Endothelial cell of umbilical vein (primary cell): ENCODE measurements at regions of chr2 and their contacts with region 1.

Region 1: GRCh38 chr2:39379643-39380524 is 57.2 kb downstream of the MAP4K3 start:
- DNase-seq: peak; percentile 69
- H3K4me3 ChIP-seq: no peak overlapping the region
- H3K27ac ChIP-seq: peak overlapping the region; percentile 73
- H3K4me1 ChIP-seq: peaks cover 11% of the 10 kb centered on the region
- H3K27me3 ChIP-seq: no peaks in the 10 kb centered on the region
- CTCF ChIP-seq: peak; percentile 29 to 34
- POLR2A ChIP-seq: no peak

Region 2: DNA sequence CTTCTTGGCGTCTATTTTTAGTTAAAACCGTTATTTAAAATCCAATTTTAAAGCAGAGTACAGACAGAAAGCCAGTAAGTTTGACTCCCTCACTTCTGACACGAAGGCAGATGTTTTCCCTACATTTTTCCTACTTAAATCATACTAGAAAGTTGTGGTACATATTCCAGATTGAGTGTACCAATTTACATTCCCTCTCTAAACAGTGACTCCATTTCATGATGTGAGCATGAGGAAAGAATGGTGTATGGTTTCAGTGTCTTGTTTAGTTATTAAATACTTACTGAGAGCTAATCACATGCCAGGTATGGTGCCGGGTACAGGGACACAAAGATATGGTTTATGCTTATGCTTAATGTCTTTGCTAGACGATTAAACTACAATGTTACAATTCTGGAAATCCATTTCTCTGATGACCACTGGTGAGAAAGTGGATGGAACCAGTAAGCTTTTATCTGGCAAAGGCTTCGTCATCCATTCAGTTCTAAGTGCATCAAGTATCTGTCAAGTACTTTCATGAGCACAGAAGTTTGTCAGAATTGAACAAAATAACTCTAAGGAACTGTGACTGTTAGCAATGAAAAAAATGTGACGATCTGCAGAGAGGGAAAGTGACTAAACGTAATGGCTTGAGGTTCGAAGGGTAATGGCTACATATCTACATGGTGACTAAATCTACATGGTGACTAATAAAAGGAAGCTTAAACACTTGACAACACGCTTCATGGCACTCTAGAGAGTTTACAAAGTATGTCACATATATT is 31.5 kb after region 1 on chr2:
- CTCF ChIA-PET with region 1: interaction called, 19 read pairs
- POLR2A ChIA-PET with region 1: no interaction called
- dilution Hi-C with region 1: no loop called
- intact Hi-C with region 1: no loop called
- DNase-seq: peak; percentile 71
- H3K4me3 ChIP-seq: peak overlapping the region in 1 of 3 experiments; percentile 34
- H3K27ac ChIP-seq: peak overlapping the region; percentile 43
- H3K4me1 ChIP-seq: peaks cover 36% of the 10 kb centered on the region
- H3K27me3 ChIP-seq: no peaks in the 10 kb centered on the region
- CTCF ChIP-seq: no peak
- POLR2A ChIP-seq: no peak

Region 3: GRCh38 chr2:39469807-39470206 is 89.9 kb after region 1 on chr2:
- CTCF ChIA-PET with region 1: interaction called, 11 read pairs
- POLR2A ChIA-PET with region 1: no interaction called
- dilution Hi-C with region 1: no loop called
- intact Hi-C with region 1: no loop called
- DNase-seq: peak; percentile 73
- H3K4me3 ChIP-seq: no peak overlapping the region
- H3K27ac ChIP-seq: peak overlapping the region; percentile 49
- H3K4me1 ChIP-seq: peaks cover 36% of the 10 kb centered on the region
- H3K27me3 ChIP-seq: no peaks in the 10 kb centered on the region
- CTCF ChIP-seq: no peak
- POLR2A ChIP-seq: no peak

Region 4: GRCh38 chr2:39513641-39514094 is 133.8 kb after region 1 on chr2:
- CTCF ChIA-PET with region 1: interaction called, 65 read pairs
- POLR2A ChIA-PET with region 1: no interaction called
- dilution Hi-C with region 1: no loop called
- intact Hi-C with region 1: loop called (anchors 1 kb)
- DNase-seq: peak; percentile 98
- H3K4me3 ChIP-seq: no peak overlapping the region
- H3K27ac ChIP-seq: peak overlapping the region; percentile 80
- H3K4me1 ChIP-seq: peaks cover 54% of the 10 kb centered on the region
- H3K27me3 ChIP-seq: no peaks in the 10 kb centered on the region
- CTCF ChIP-seq: peak; percentile 68 to 83
- POLR2A ChIP-seq: no peak

Region 5: DNA sequence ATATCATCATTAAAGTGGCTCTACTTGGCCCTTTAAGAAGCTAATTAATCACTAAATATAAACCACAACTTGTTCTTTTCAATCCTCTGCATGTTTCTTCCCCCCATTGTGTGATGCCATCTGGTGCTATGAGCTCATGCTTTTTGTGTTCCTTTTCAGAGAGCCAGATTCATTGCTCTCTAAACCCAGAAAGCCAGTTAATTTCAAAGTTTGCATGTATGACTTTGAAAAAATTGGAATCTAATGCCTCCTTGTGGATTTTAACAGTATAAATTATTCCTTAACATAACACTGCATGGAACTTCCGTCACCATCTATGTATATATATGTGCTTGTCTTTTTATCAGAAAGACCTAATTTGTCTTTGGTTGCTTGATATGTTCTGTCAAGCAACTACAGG is 317.0 kb after region 1 on chr2:
- CTCF ChIA-PET with region 1: interaction called, 116 read pairs
- POLR2A ChIA-PET with region 1: interaction called, 3 read pairs
- dilution Hi-C with region 1: no loop called
- intact Hi-C with region 1: loop called (anchors 1 kb)
- DNase-seq: peak; percentile 84
- H3K4me3 ChIP-seq: no peak overlapping the region
- H3K27ac ChIP-seq: peak overlapping the region; percentile 13
- H3K4me1 ChIP-seq: peaks cover 18% of the 10 kb centered on the region
- H3K27me3 ChIP-seq: no peaks in the 10 kb centered on the region
- CTCF ChIP-seq: peak in 1 of 2 donors; percentile 17
- POLR2A ChIP-seq: no peak